Activated CD4-positive, alpha-beta T cell treated with anti-CD3 and anti-CD28 coated beads for 36 hours (primary cell): ENCODE measurements at regions of chr16 and their contacts with region 1.

Region 1: GRCh38 chr16:4475880-4476788 is at the start of gene HMOX2:
- DNase-seq: peak; percentile 96
- ATAC-seq: peak; percentile 85
- H3K4me3 Mint-ChIP-seq: peak within 1 kb of the TSS; percentile 88
- H3K27ac Mint-ChIP-seq: peak within 1 kb of the TSS; percentile 85
- H3K4me1 Mint-ChIP-seq: peaks cover 43% of the 10 kb centered on the region
- H3K27me3 Mint-ChIP-seq: no peaks in the 10 kb centered on the region
- total RNA-seq, gene HMOX2: 67.7 to 80.2 TPM

Region 2: GRCh38 chr16:4271176-4272066 is 204.7 kb before region 1 on chr16:
- CTCF ChIA-PET with region 1: no interaction called
- POLR2A ChIA-PET with region 1: no interaction called
- intact Hi-C with region 1: loop called in 1 of 2 experiments (anchors 1 kb)
- DNase-seq: peak; percentile 96
- ATAC-seq: peak; percentile 85
- H3K4me3 Mint-ChIP-seq: peak overlapping the region; percentile 84
- H3K27ac Mint-ChIP-seq: peak overlapping the region; percentile 94
- H3K4me1 Mint-ChIP-seq: peaks cover 12% of the 10 kb centered on the region
- H3K27me3 Mint-ChIP-seq: no peaks in the 10 kb centered on the region

Region 3: GRCh38 chr16:4425378-4426020 is 50.6 kb before region 1 on chr16 and contains the start of gene DNAJA3:
- CTCF ChIA-PET with region 1: no interaction called
- POLR2A ChIA-PET with region 1: no interaction called
- intact Hi-C with region 1: loop called in 1 of 2 experiments (anchors 1 kb)
- DNase-seq: peak; percentile 96
- ATAC-seq: peak; percentile 93
- H3K4me3 Mint-ChIP-seq: peak within 1 kb of the TSS; percentile 95
- H3K27ac Mint-ChIP-seq: peak within 1 kb of the TSS; percentile 98
- H3K4me1 Mint-ChIP-seq: peaks cover 27% of the 10 kb centered on the region
- H3K27me3 Mint-ChIP-seq: no peaks in the 10 kb centered on the region
- total RNA-seq, gene DNAJA3: 93.9 to 102 TPM

Region 4: GRCh38 chr16:4538350-4539235 is 62.5 kb after region 1 on chr16 and contains the start of gene CDIP1:
- CTCF ChIA-PET with region 1: interaction called, 5 read pairs
- POLR2A ChIA-PET with region 1: no interaction called
- intact Hi-C with region 1: loop called (anchors 1 to 2 kb)
- DNase-seq: peak; percentile 99
- ATAC-seq: peak; percentile 81
- H3K4me3 Mint-ChIP-seq: peak within 1 kb of the TSS; percentile 75
- H3K27ac Mint-ChIP-seq: peak within 1 kb of the TSS; percentile 63
- H3K4me1 Mint-ChIP-seq: peaks cover 41% of the 10 kb centered on the region
- H3K27me3 Mint-ChIP-seq: no peaks in the 10 kb centered on the region
- total RNA-seq, gene CDIP1: 28.3 to 30.2 TPM

Region 5: GRCh38 chr16:4624015-4624826 is 148.1 kb after region 1 on chr16 and contains the start of gene MGRN1:
- CTCF ChIA-PET with region 1: interaction called, 3 read pairs
- POLR2A ChIA-PET with region 1: no interaction called
- intact Hi-C with region 1: loop called in 1 of 2 experiments (anchors 2 kb)
- DNase-seq: peak; percentile 96
- ATAC-seq: peak; percentile 89
- H3K4me3 Mint-ChIP-seq: peak within 1 kb of the TSS; percentile 99
- H3K27ac Mint-ChIP-seq: peak within 1 kb of the TSS; percentile 100
- H3K4me1 Mint-ChIP-seq: peaks cover 38% of the 10 kb centered on the region
- H3K27me3 Mint-ChIP-seq: no peaks in the 10 kb centered on the region
- total RNA-seq, gene MGRN1: 65.0 to 75.4 TPM

Region 6: GRCh38 chr16:4766874-4767628 is 290.9 kb after region 1 on chr16 and contains the start of gene ZNF500:
- CTCF ChIA-PET with region 1: no interaction called
- POLR2A ChIA-PET with region 1: no interaction called
- intact Hi-C with region 1: loop called in 1 of 2 experiments (anchors 2 kb)
- DNase-seq: peak; percentile 97
- ATAC-seq: peak; percentile 78
- H3K4me3 Mint-ChIP-seq: peak within 1 kb of the TSS; percentile 89
- H3K27ac Mint-ChIP-seq: peak within 1 kb of the TSS; percentile 91
- H3K4me1 Mint-ChIP-seq: peaks cover 25% of the 10 kb centered on the region
- H3K27me3 Mint-ChIP-seq: no peaks in the 10 kb centered on the region
- total RNA-seq, gene ZNF500: 10.3 to 11.6 TPM

Region 7: DNA sequence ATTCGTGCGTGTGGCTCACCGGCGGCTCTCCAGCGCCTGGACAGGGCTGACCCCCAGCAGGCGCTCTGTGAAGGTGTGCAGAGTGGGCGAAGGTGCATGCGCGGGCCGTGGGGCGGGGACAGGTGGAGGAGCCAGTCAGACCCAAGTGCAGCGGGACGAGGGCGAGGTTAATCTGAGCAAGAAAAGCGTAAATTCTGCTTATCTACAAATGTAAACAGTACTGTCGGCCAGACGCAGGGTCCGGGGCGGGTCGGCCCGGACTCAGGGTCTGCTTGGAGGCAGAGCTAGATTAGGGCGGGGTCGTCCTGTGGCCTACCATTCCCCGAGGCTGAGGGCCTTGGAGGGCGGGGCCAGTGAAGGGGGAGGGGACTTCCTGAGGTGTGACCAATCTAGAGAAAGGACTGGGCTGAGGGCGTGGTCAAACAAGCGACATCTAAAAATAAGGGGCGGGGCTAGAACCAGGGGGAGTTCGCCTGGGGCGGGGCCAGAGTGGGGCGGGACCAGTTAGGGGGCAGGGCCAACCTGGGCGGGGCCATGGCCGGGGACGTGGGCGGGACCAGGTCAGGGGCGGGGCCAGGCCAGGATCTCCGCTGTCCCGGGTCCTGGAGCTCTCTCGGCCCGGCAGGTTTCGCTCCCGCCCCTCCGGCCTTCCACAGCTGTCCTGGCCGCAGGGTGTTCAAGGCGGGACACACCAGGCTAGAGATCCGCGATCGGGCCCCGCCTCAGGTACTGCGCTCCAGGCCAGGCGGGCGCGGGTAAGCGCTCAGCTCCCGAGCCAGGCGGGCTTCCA is 481.8 kb after region 1 on chr16 and contains the start of gene SEC14L5:
- CTCF ChIA-PET with region 1: no interaction called
- POLR2A ChIA-PET with region 1: no interaction called
- intact Hi-C with region 1: loop called in 1 of 2 experiments (anchors 1 kb)
- DNase-seq: peak; percentile 98
- ATAC-seq: peak; percentile 95
- H3K4me3 Mint-ChIP-seq: peak within 1 kb of the TSS; percentile 75
- H3K27ac Mint-ChIP-seq: peak within 1 kb of the TSS; percentile 1
- H3K4me1 Mint-ChIP-seq: peaks cover 12% of the 10 kb centered on the region
- H3K27me3 Mint-ChIP-seq: peaks cover 33% of the 10 kb centered on the region
- total RNA-seq, gene SEC14L5: 0.09 to 0.28 TPM